ENCODE measurements at regions of chr2 and their contacts with region 1.

Region 1: GRCh38 chr2:179129574-179130238 is 79.8 kb upstream of the CCDC141 start:
- DNase-seq: peak; percentile 56
- ATAC-seq: no peak
- H3K4me3 ChIP-seq: no peak overlapping the region
- H3K27ac ChIP-seq: no peak overlapping the region
- H3K4me1 ChIP-seq: no peaks in the 10 kb centered on the region
- H3K27me3 ChIP-seq: no peaks in the 10 kb centered on the region
- CTCF ChIP-seq: peak; percentile 82

Region 2: GRCh38 chr2:178914259-178914849 is 215.4 kb before region 1 on chr2:
- CTCF ChIA-PET with region 1: no interaction called
- POLR2A ChIA-PET with region 1: no interaction called
- intact Hi-C with region 1: loop called (anchors 2 kb)
- DNase-seq: peak; percentile 92
- ATAC-seq: peak; percentile 59
- H3K4me3 ChIP-seq: no peak overlapping the region
- H3K27ac ChIP-seq: no peak overlapping the region
- H3K4me1 ChIP-seq: peaks cover 52% of the 10 kb centered on the region
- H3K27me3 ChIP-seq: no peaks in the 10 kb centered on the region
- CTCF ChIP-seq: peak; percentile 94

Region 3: GRCh38 chr2:179031731-179032408 is 97.8 kb before region 1 on chr2:
- CTCF ChIA-PET with region 1: interaction called, 10 read pairs
- POLR2A ChIA-PET with region 1: no interaction called
- intact Hi-C with region 1: no loop called
- DNase-seq: peak; percentile 20
- ATAC-seq: peak; percentile 24
- H3K4me3 ChIP-seq: no peak overlapping the region
- H3K27ac ChIP-seq: no peak overlapping the region
- H3K4me1 ChIP-seq: no peaks in the 10 kb centered on the region
- H3K27me3 ChIP-seq: no peaks in the 10 kb centered on the region
- CTCF ChIP-seq: no peak

Region 4: DNA sequence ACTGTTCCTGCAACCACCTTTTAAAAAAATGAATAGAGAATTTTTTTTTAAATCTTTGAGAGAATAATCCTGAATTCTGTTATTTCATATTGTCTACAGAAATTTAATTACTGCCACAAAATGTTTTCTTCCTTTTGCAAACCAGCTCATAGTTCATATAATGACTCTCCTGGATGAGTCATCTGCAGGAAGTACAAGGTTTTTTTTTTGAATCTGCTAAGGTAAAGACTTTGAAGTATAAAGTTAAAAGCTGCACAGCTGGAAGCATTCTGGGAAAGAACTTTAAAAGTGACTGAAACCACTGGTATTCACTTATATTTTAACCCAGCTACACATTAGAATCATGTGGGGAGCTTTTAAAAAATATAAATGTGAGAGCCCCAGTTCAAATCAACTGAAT is 109.5 kb after region 1 on chr2:
- CTCF ChIA-PET with region 1: no interaction called
- POLR2A ChIA-PET with region 1: no interaction called
- intact Hi-C with region 1: no loop called
- DNase-seq: peak; percentile 80
- ATAC-seq: peak; percentile 65
- H3K4me3 ChIP-seq: peak overlapping the region; percentile 33; the same call in 1 of the 2 replicates
- H3K27ac ChIP-seq: peak overlapping the region; percentile 60
- H3K4me1 ChIP-seq: peaks cover 62% of the 10 kb centered on the region
- H3K27me3 ChIP-seq: no peaks in the 10 kb centered on the region
- CTCF ChIP-seq: no peak